ENCODE measurements at regions of chr1 and their contacts with region 1.

Region 1: GRCh38 chr1:27332536-27333281 is 9.1 kb upstream of the SYTL1 start:
- DNase-seq: no peak
- H3K4me3 ChIP-seq: no peak overlapping the region
- H3K27ac ChIP-seq: no peak overlapping the region
- H3K27me3 ChIP-seq: no peaks in the 10 kb centered on the region
- CTCF ChIP-seq: peak; percentile 81

Region 2: DNA sequence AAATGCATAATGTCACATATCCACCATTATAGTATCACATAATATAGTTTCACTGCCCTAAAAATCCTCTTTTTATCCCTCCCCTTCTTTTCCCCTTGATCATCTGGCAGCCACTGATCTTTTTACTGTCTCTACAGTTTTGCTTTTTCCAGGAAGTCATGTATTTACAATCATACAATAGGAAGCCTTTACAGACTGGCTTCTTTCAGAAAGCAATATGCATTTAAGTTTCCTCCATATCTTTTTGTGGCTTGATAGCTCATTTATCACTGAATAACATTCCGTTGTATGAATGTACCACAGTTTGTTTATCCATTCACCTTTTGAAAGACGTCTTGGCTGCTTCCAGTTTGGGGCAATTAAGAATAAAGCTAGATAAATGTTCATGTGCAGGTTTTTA is 112.6 kb before region 1 on chr1:
- CTCF ChIA-PET with region 1: no interaction called
- POLR2A ChIA-PET with region 1: no interaction called
- DNase-seq: no peak
- H3K4me3 ChIP-seq: no peak overlapping the region
- H3K27ac ChIP-seq: no peak overlapping the region
- H3K27me3 ChIP-seq: peaks cover 2% of the 10 kb centered on the region
- CTCF ChIP-seq: no peak

Region 3: DNA sequence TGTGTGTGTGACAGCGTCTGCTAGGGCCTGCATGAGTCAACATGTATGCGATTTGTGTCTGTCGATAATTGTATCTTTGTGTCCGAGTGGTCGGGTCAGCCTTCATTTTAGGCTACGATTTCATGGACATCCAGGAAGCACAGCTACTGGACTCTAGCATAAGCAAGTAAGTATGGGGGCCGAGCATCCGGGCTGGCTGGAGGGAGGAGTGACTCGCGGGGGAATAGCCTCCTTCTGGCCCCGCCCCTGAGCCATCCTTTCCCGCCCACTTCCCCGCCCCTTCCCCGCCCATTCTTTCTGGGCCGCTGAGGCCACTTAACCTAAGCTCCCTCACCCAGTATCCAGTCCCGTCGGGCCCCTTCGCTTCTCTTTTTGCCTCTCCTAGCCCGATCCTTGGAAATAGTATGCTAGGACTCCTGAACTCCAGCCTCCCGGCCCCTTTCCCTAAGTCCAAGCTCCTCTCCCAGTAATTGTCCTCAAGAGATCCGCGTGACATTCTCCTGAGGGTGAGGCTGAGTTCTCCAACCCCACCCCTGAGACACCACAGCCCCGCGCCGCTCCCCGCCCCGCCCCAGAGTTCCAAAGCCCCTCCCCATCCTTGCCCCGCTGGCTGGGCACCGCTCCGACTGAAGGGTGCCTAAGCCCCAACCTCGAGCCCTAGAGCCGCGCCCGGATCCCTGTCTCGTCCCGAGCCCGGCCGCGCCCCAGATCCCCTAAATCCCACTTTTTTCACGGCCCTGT is 32.8 kb after region 1 on chr1:
- CTCF ChIA-PET with region 1: interaction called, 16 read pairs
- POLR2A ChIA-PET with region 1: interaction called, 3 read pairs
- DNase-seq: peak; percentile 67
- H3K4me3 ChIP-seq: peak overlapping the region; percentile 74
- H3K27ac ChIP-seq: peak overlapping the region; percentile 90
- H3K27me3 ChIP-seq: no peaks in the 10 kb centered on the region
- CTCF ChIP-seq: no peak